ENCODE measurements at regions of chr2 and their contacts with region 1.

Region 1: GRCh38 chr2:74488644-74489481 is 6.0 kb downstream of the TTC31 start:
- DNase-seq: no peak
- H3K4me3 ChIP-seq: no peak overlapping the region
- H3K27ac ChIP-seq: no peak overlapping the region
- H3K4me1 ChIP-seq: peaks cover 0 to 6% (median 2%) of the 10 kb centered on the region in 4 donors
- H3K27me3 ChIP-seq: no peaks in the 10 kb centered on the region
- CTCF ChIP-seq: no peak
- EP300 ChIP-seq: no peak
- POLR2A ChIP-seq: no peak

Region 2: DNA sequence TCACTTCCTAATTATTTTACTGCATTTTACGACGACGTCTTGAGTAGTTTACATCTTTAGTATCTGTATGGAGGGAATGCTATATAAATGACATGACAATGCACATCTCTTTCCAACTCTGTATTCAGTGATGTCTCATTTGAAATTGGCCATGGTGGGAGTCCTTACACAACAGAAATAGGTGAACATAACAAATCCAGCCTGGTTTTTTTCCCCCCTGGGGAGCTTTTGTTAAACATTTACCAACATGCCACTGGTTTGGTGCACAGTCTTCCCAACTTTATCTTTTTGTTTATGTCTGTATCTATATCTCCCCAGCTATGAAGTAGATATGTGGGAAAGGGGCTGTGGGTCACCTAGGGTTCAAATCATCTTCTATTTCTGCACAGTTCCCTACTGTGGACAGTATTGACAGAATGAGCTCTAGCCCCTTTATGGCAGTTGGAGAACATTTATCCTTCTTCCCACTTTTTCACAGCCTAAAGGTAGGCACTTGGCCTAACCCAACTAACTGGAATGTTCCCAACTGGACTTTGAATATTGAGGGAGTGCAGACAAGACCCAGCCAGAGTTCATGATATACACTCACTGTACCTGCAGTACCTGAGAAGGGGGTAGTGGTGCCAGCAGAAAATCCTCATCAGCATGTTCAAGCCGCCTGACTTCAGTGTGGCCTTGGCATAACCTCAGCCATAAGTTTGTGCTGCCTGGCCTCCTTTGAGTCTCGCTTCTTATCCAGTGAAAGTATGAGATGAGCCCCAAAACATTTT is 41.4 kb before region 1 on chr2:
- in situ Hi-C with region 1: no loop called
- intact Hi-C with region 1: no loop called
- DNase-seq: no peak
- H3K4me3 ChIP-seq: no peak overlapping the region
- H3K27ac ChIP-seq: no peak overlapping the region
- H3K4me1 ChIP-seq: peaks cover 0 to 12% (median 2%) of the 10 kb centered on the region in 4 donors
- H3K27me3 ChIP-seq: peaks cover 3% of the 10 kb centered on the region
- CTCF ChIP-seq: no peak
- EP300 ChIP-seq: no peak
- POLR2A ChIP-seq: no peak

Region 3: GRCh38 chr2:74587664-74588277 is 98.9 kb after region 1 on chr2:
- in situ Hi-C with region 1: loop called (anchors 5 to 25 kb)
- intact Hi-C with region 1: loop called (anchors 5 kb)
- DNase-seq: peak; percentile 65
- H3K4me3 ChIP-seq: no peak overlapping the region
- H3K27ac ChIP-seq: no peak overlapping the region
- H3K4me1 ChIP-seq: peaks cover 0 to 3% (median 0%) of the 10 kb centered on the region in 4 donors
- H3K27me3 ChIP-seq: peaks cover 18% of the 10 kb centered on the region
- CTCF ChIP-seq: peak; percentile 56 to 69 (median 66)
- EP300 ChIP-seq: no peak
- POLR2A ChIP-seq: no peak

Measured in transverse colon (tissue), 4 donors.